ENCODE measurements at regions of chr1 and their contacts with region 1.

Region 1: GRCh38 chr1:31182352-31182751 is 57.3 kb downstream of the NKAIN1 start:
- DNase-seq: peak; percentile 68
- ATAC-seq: peak; percentile 64
- H3K4me3 Mint-ChIP-seq: no peak overlapping the region
- H3K27ac Mint-ChIP-seq: no peak overlapping the region
- H3K4me1 Mint-ChIP-seq: peaks cover 9% of the 10 kb centered on the region
- H3K27me3 Mint-ChIP-seq: peaks cover 18% of the 10 kb centered on the region

Region 2: DNA sequence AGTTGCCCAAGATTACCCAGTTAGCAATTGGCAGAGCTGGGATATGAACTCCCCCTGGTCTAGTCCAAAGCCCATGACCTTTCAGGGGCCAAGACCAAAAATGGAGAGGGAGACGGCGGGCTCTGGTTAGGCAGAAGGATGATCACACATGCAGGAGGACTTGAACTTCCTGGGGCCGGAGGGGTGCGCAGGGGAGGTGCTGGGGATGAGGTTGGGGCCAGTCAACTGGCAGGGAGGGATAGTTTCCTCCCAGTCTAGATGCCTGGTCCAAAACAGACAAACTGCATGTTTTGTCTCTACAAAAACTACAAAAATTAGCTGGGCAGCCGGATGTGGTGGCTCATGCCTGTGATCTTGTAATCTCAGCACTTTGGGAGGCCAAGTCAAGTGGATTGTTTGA is 20.8 kb before region 1 on chr1:
- CTCF ChIA-PET with region 1: interaction called, 10 read pairs
- POLR2A ChIA-PET with region 1: no interaction called
- DNase-seq: no peak
- ATAC-seq: no peak
- H3K4me3 Mint-ChIP-seq: no peak overlapping the region
- H3K27ac Mint-ChIP-seq: no peak overlapping the region
- H3K4me1 Mint-ChIP-seq: peaks cover 11% of the 10 kb centered on the region
- H3K27me3 Mint-ChIP-seq: peaks cover 2% of the 10 kb centered on the region

Region 3: GRCh38 chr1:31170486-31170735 is 11.9 kb before region 1 on chr1:
- CTCF ChIA-PET with region 1: interaction called, 18 read pairs
- POLR2A ChIA-PET with region 1: no interaction called
- DNase-seq: no peak
- ATAC-seq: no peak
- H3K4me3 Mint-ChIP-seq: no peak overlapping the region
- H3K27ac Mint-ChIP-seq: peak overlapping the region; percentile 46
- H3K4me1 Mint-ChIP-seq: peaks cover 13% of the 10 kb centered on the region
- H3K27me3 Mint-ChIP-seq: no peaks in the 10 kb centered on the region

Region 4: DNA sequence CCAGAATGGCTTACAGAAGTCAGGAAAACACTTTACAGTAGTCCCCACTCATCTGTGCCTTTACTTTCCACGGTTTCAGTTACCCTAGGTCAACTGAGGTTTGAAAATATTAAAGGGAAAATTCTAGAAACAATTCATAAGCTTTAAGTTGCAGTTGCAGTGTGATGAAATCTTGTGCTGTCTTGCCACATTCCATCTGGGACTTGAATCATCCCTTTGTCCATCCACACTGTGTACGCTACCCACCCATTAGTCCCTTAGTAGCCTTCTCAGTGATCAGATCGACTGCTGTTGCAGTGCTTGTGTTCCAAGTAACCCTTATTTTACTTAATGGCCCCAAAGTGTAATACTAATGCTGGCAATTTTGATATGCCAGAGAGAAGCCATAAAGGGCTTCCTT is 145.0 kb after region 1 on chr1:
- CTCF ChIA-PET with region 1: interaction called, 11 read pairs
- POLR2A ChIA-PET with region 1: no interaction called
- DNase-seq: no peak
- ATAC-seq: no peak
- H3K4me3 Mint-ChIP-seq: no peak overlapping the region
- H3K27ac Mint-ChIP-seq: no peak overlapping the region
- H3K4me1 Mint-ChIP-seq: no peaks in the 10 kb centered on the region
- H3K27me3 Mint-ChIP-seq: no peaks in the 10 kb centered on the region

Region 5: GRCh38 chr1:31335007-31335406 is 152.7 kb after region 1 on chr1:
- CTCF ChIA-PET with region 1: interaction called, 11 read pairs
- POLR2A ChIA-PET with region 1: no interaction called
- DNase-seq: peak; percentile 21
- ATAC-seq: no peak
- H3K4me3 Mint-ChIP-seq: no peak overlapping the region
- H3K27ac Mint-ChIP-seq: no peak overlapping the region
- H3K4me1 Mint-ChIP-seq: no peaks in the 10 kb centered on the region
- H3K27me3 Mint-ChIP-seq: no peaks in the 10 kb centered on the region

Region 6: DNA sequence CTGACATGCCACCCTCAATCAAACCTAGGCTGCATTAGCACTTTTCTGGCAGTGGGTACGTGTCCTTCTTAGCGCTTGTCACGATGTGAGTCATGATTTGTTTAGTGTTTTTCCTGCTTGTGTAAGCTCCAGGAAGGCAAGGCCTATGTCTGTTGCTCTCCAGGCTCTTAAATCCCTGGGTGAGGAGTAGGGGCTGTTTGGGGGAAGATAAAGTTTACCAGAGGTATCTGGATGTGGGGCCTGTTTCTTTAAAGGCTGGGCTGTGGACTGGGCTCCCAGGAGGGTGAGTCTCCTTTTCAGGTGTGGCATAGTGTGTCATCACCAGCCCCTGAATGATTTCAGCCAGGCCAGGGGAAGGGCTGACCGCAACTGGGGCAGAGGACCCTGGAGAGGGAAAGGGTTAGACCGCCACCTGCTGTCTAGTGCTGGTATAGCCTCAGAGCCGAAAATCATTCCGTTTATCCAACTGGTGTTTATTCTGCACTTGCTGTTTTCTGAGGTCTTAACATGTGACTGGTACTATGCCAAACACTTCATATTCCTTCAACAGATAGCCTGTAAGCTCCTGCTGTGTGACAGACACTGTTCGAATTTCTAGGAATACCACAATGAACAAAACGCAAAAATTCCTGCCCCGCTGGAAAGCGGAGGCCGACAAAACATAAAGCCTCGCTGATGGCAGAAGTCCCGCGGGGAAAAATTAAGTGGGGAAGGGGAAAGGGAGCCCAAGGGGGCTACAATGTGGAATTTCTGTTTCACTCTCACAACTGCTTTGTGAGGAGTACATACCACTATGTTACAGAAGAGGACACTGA is 240.4 kb after region 1 on chr1:
- CTCF ChIA-PET with region 1: interaction called, 46 read pairs
- POLR2A ChIA-PET with region 1: no interaction called
- DNase-seq: peak; percentile 76
- ATAC-seq: peak; percentile 54
- H3K4me3 Mint-ChIP-seq: no peak overlapping the region
- H3K27ac Mint-ChIP-seq: no peak overlapping the region
- H3K4me1 Mint-ChIP-seq: peaks cover 18% of the 10 kb centered on the region
- H3K27me3 Mint-ChIP-seq: peaks cover 17% of the 10 kb centered on the region

Measured in activated CD8-positive, alpha-beta T cell treated with anti-CD3 and anti-CD28 coated beads, Interleukin-2, amount 10 ng/mL, durations not matched to agents 7 days and 5 days (primary cell).